Activated CD4-positive, alpha-beta T cell treated with anti-CD3 and anti-CD28 coated beads for 36 hours (primary cell): ENCODE measurements at regions of chr1 and their contacts with region 1.

Region 1: GRCh38 chr1:172338295-172338735 is 82.2 kb upstream of the C1orf105 start:
- DNase-seq: peak; percentile 82
- ATAC-seq: peak; percentile 88
- H3K4me3 Mint-ChIP-seq: no peak overlapping the region
- H3K27ac Mint-ChIP-seq: peak overlapping the region; percentile 30
- H3K4me1 Mint-ChIP-seq: peaks cover 48% of the 10 kb centered on the region
- H3K27me3 Mint-ChIP-seq: peaks cover 2% of the 10 kb centered on the region

Region 2: GRCh38 chr1:172180501-172181285 is 157.6 kb before region 1 on chr1:
- CTCF ChIA-PET with region 1: interaction called, 3 read pairs
- POLR2A ChIA-PET with region 1: no interaction called
- intact Hi-C with region 1: loop called (anchors 1 kb)
- DNase-seq: peak; percentile 69
- ATAC-seq: peak; percentile 89
- H3K4me3 Mint-ChIP-seq: peak overlapping the region; percentile 66
- H3K27ac Mint-ChIP-seq: peak overlapping the region; percentile 95
- H3K4me1 Mint-ChIP-seq: peaks cover 42% of the 10 kb centered on the region
- H3K27me3 Mint-ChIP-seq: no peaks in the 10 kb centered on the region

Region 3: DNA sequence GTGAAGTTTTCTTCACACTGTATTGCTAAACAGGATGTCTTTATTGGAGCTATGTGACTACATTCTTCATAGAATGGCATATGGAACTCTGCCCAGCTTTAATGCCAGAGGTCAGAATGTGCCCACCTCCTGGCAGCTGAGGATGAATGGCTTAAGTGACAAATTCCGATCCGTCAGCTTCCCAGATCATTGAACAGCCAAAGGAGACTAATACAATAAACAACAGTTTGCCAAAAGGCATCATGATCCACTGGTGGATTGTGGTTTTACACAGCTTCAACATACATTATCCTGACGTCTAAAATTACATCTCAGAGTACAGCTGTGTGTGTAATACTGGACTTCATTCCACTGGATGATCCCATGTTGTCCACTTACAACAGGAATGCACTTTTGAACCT is 13.4 kb after region 1 on chr1:
- CTCF ChIA-PET with region 1: interaction called, 11 read pairs
- POLR2A ChIA-PET with region 1: no interaction called
- intact Hi-C with region 1: no loop called
- DNase-seq: no peak
- ATAC-seq: no peak
- H3K4me3 Mint-ChIP-seq: no peak overlapping the region
- H3K27ac Mint-ChIP-seq: no peak overlapping the region
- H3K4me1 Mint-ChIP-seq: peaks cover 35% of the 10 kb centered on the region
- H3K27me3 Mint-ChIP-seq: peaks cover 3% of the 10 kb centered on the region

Region 4: GRCh38 chr1:172375211-172375631 is 36.9 kb after region 1 on chr1:
- CTCF ChIA-PET with region 1: no interaction called
- POLR2A ChIA-PET with region 1: no interaction called
- intact Hi-C with region 1: loop called (anchors 1 to 2 kb)
- DNase-seq: no peak
- ATAC-seq: peak; percentile 85
- H3K4me3 Mint-ChIP-seq: no peak overlapping the region
- H3K27ac Mint-ChIP-seq: no peak overlapping the region
- H3K4me1 Mint-ChIP-seq: peaks cover 21% of the 10 kb centered on the region
- H3K27me3 Mint-ChIP-seq: no peaks in the 10 kb centered on the region